Naive thymus-derived CD4-positive, alpha-beta T cell (primary cell): ENCODE measurements at regions of chr7 and their contacts with region 1.

Region 1: DNA sequence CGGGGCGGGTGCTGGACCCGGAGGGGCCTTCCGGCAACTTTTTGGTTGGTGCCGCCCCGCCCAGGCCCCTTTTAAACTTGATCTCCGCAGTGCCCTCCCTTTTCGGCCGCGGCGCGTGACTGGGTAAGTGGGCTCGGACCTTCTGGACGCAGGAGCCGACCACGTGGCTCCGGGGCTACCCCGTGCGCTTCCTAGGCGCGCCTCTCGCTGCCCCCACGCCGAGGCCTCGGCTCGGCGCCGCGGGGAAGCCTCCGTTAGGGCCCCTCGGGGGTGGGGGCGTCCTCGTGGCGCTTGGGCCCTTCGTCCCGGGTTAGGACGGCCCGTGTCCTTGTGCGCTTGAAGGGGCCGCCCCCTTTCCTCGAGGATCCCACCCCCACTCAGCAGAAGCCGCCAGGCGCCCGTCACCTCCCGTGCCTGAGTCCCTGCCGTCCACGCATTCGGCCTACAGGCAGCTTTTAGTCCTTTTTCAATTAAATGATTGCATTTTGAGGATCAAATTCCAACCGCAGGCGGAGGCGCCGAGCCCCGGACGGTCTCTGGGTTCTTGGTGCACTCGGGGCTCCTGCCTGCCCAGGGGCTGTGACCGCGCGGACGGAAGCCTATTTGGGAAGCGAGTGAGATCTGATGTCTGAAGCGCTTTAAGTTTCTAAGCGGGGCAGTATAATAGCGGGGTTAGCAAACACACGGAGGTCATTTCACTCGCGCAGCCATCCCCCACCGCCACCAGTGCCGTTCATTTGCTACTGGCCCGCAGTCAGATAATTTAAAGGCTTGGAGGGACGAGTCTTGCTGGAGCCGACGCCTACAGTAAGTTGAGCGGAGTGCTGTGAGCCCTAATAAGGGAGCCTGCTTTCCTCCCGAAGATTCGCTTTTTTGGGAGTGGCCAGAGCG is 31.8 kb upstream of the TOMM7 start:
- DNase-seq: peak in 8 of 9 donors; percentile 9 to 87 (median 70)
- ATAC-seq: peak; percentile 39
- H3K4me3 ChIP-seq: peak overlapping the region; percentile 88
- H3K4me3 Mint-ChIP-seq: peak overlapping the region; percentile 90 to 97 (median 94)
- H3K27ac ChIP-seq: peak overlapping the region; percentile 93
- H3K27ac Mint-ChIP-seq: peak overlapping the region; percentile 85 to 97 (median 92)
- H3K4me1 ChIP-seq: peaks cover 0 to 4% of the 10 kb centered on the region in 2 donors
- H3K4me1 Mint-ChIP-seq: peaks cover 11 to 37% (median 16%) of the 10 kb centered on the region in 7 donors
- H3K27me3 ChIP-seq: no peaks in the 10 kb centered on the region
- H3K27me3 Mint-ChIP-seq: peaks cover 0 to 5% (median 0%) of the 10 kb centered on the region in 5 donors

Region 2: GRCh38 chr7:22672846-22673652 is 181.4 kb before region 1 on chr7:
- CTCF ChIA-PET with region 1: no interaction called
- POLR2A ChIA-PET with region 1: no interaction called
- intact Hi-C with region 1: loop called in 1 of 2 experiments (anchors 10 kb)
- DNase-seq: no peak
- ATAC-seq: no peak
- H3K4me3 ChIP-seq: no peak overlapping the region
- H3K4me3 Mint-ChIP-seq: peak overlapping the region in 7 of 10 donors; percentile 7 to 68 (median 37)
- H3K27ac ChIP-seq: no peak overlapping the region
- H3K27ac Mint-ChIP-seq: peak overlapping the region; percentile 14 to 88 (median 78)
- H3K4me1 ChIP-seq: peaks cover 18 to 54% of the 10 kb centered on the region in 2 donors
- H3K4me1 Mint-ChIP-seq: peaks cover 43 to 68% (median 65%) of the 10 kb centered on the region in 7 donors
- H3K27me3 ChIP-seq: no peaks in the 10 kb centered on the region
- H3K27me3 Mint-ChIP-seq: peaks cover 0 to 13% (median 0%) of the 10 kb centered on the region in 5 donors

Region 3: DNA sequence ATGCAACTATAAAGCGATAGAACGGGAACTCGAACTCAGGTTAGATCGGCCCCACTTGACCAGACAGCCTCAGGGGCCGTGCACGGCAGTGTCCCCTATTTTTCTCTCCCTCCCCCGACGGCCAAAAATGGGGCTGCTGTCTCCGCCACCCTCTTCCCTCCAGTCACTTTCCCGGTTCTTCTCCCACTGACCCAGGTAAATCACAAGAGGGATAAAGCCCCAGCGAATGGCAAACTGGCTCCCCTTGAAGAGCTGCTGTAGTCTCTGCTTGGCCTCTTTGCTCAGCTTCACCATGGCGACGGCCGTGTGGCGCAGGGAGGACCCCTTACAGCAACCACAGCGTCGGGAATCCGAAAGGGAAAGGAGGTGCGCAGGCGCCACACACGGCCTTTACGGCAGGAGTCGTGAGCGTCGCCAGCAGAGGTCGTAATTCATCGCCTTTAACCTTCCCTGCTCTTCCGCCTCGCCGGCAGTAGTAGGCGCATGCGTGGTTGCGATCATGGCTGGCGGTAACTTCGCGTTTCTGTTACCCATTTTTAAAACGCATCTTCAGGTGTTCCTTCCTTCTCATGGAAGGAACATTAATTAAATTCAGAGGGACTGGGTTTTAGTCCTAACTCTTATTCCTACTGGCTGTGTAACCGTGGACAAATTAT is 31.8 kb before region 1 on chr7 and contains the start of gene TOMM7:
- CTCF ChIA-PET with region 1: no interaction called
- POLR2A ChIA-PET with region 1: interaction called, 6 read pairs
- intact Hi-C with region 1: loop called (anchors 1 kb)
- DNase-seq: peak; percentile 68 to 92 (median 90)
- ATAC-seq: peak; percentile 99
- H3K4me3 ChIP-seq: peak within 1 kb of the TSS; percentile 83
- H3K4me3 Mint-ChIP-seq: peak within 1 kb of the TSS; percentile 93 to 100 (median 99)
- H3K27ac ChIP-seq: peak within 1 kb of the TSS; percentile 94
- H3K27ac Mint-ChIP-seq: peak within 1 kb of the TSS; percentile 94 to 100 (median 99)
- H3K4me1 ChIP-seq: peaks cover 6 to 19% of the 10 kb centered on the region in 2 donors
- H3K4me1 Mint-ChIP-seq: peaks cover 15 to 53% (median 43%) of the 10 kb centered on the region in 7 donors
- H3K27me3 ChIP-seq: peaks cover 0 to 4% of the 10 kb centered on the region in 2 donors
- H3K27me3 Mint-ChIP-seq: peaks cover 15 to 36% (median 19%) of the 10 kb centered on the region in 5 donors
- total RNA-seq, gene TOMM7: 302 to 737 (median 649) TPM

Region 4: DNA sequence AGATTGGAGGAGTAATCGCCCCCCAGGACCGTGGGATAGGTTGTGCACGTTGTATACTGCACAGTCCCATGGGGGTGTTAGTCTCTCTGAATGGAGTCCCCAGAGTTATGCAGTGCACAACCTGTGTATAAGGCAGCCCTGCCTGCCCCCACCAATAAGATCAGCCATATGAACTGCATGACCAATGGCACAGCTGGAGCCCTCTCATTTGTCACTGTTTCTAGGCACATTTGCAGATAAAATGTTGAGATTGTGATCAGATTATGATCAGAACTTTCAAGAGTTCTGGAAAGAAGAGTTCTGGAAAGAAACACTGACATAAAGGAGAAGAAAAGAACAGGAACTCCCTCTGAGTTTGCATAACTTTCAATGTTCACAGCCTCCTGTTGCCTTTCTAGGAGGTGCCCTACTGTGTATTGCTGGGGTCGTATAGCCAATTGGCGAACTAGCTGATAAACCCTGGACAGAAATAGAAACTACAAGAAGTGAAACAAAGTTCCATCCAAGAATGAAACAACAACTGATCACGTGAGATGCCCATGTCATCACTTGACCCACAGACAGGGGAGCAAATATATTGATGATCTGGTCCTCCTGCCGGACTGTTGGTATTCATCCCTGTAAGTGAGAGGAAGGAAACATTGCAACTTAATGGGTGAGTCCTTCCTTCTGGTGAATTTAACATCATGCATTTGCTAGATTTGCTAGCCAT is 17.8 kb after region 1 on chr7:
- CTCF ChIA-PET with region 1: no interaction called
- POLR2A ChIA-PET with region 1: no interaction called
- intact Hi-C with region 1: no loop called
- DNase-seq: no peak
- ATAC-seq: peak; percentile 69
- H3K4me3 ChIP-seq: no peak overlapping the region
- H3K4me3 Mint-ChIP-seq: no peak overlapping the region
- H3K27ac ChIP-seq: no peak overlapping the region
- H3K27ac Mint-ChIP-seq: no peak overlapping the region
- H3K4me1 ChIP-seq: no peaks in the 10 kb centered on the region
- H3K4me1 Mint-ChIP-seq: peaks cover 0 to 13% (median 0%) of the 10 kb centered on the region in 7 donors
- H3K27me3 ChIP-seq: no peaks in the 10 kb centered on the region
- H3K27me3 Mint-ChIP-seq: no peaks in the 10 kb centered on the region

Region 5: DNA sequence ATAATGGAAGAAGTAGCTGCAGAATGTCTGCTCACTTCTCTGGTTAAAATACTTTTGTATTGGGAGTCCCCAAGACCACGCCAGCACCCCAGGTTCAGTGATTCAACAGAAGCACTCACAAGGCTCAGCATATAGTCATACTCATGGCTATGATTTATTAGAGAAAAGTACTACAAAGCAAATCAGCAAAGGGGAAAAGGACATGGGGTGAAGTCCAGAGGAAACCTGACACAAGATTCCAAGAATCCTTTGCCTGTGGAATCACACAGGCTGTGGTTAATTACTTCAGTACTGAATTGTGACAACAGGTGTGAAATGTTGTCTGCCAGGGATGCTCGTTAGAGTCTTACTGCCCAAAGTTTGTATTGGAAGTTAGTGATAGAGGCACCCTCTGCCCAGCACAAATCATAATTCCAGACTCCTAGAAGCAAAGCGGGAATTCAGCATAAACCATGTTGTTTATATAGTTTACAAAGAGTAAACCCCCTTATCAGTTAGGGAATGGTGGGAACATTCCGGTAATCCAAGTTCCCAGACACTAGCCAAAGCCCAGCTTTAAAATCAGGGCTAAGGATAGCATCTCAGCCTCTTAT is 80.2 kb after region 1 on chr7:
- CTCF ChIA-PET with region 1: no interaction called
- POLR2A ChIA-PET with region 1: no interaction called
- intact Hi-C with region 1: loop called in 1 of 2 experiments (anchors 5 kb)
- DNase-seq: no peak
- ATAC-seq: no peak
- H3K4me3 ChIP-seq: no peak overlapping the region
- H3K4me3 Mint-ChIP-seq: no peak overlapping the region
- H3K27ac ChIP-seq: no peak overlapping the region
- H3K27ac Mint-ChIP-seq: no peak overlapping the region
- H3K4me1 ChIP-seq: no peaks in the 10 kb centered on the region
- H3K4me1 Mint-ChIP-seq: no peaks in the 10 kb centered on the region
- H3K27me3 ChIP-seq: no peaks in the 10 kb centered on the region
- H3K27me3 Mint-ChIP-seq: peaks cover 0 to 12% (median 5%) of the 10 kb centered on the region in 5 donors

Region 6: GRCh38 chr7:23105644-23106056 is 251.2 kb after region 1 on chr7 and contains the start of gene KLHL7:
- CTCF ChIA-PET with region 1: no interaction called
- POLR2A ChIA-PET with region 1: no interaction called
- intact Hi-C with region 1: loop called (anchors 1 to 2 kb)
- DNase-seq: peak; percentile 90 to 95 (median 93)
- ATAC-seq: peak; percentile 99
- H3K4me3 ChIP-seq: peak within 1 kb of the TSS; percentile 93
- H3K4me3 Mint-ChIP-seq: peak within 1 kb of the TSS; percentile 90 to 99 (median 96)
- H3K27ac ChIP-seq: peak within 1 kb of the TSS; percentile 90
- H3K27ac Mint-ChIP-seq: peak within 1 kb of the TSS; percentile 91 to 97 (median 96)
- H3K4me1 ChIP-seq: peaks cover 4 to 18% of the 10 kb centered on the region in 2 donors
- H3K4me1 Mint-ChIP-seq: peaks cover 33 to 51% (median 47%) of the 10 kb centered on the region in 7 donors
- H3K27me3 ChIP-seq: no peaks in the 10 kb centered on the region
- H3K27me3 Mint-ChIP-seq: no peaks in the 10 kb centered on the region
- total RNA-seq, gene KLHL7: 16.9 to 22.9 (median 22.7) TPM

Region 7: DNA sequence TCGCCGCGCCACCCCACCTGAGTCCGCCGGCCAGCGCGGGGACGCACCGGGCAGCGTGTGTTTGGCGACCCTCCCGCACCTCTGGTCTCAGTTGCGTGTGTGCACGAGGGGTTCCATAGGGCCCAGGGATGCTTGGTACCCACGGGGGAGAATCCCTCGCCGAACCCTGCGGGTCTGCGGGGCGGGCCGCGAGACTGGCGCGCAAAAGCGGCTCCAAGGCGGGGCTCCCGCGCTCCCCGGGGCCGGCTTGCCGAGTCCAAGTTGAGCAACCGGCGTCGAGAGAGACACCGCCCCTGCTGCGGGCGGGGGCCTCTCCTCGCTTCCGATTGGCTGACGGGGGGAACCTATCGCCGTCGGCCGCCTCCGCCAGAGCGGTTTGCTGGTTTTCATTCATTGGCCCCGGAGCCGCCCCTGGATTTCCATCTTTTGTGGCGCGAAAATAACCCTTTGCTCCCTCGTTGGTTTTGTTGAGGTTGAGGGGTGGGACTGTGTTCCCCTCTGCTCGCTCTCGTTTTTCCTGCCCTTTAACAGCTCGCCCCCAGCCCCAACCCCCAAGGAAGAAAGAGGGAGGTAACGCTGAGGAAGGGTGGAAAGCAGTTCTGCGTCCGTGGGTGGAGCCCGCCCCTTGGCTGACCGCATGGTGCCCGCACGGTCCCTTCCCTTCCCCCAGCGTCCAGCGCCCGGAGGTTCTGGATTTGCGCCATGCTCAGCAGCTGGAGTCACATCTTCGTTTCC is 619.9 kb after region 1 on chr7:
- CTCF ChIA-PET with region 1: no interaction called
- POLR2A ChIA-PET with region 1: no interaction called
- intact Hi-C with region 1: loop called in 1 of 2 experiments (anchors 10 kb)
- DNase-seq: peak in 6 of 9 donors; percentile 13 to 90 (median 26)
- ATAC-seq: peak; percentile 80
- H3K4me3 ChIP-seq: no peak overlapping the region
- H3K4me3 Mint-ChIP-seq: peak overlapping the region; percentile 13 to 85 (median 54)
- H3K27ac ChIP-seq: no peak overlapping the region
- H3K27ac Mint-ChIP-seq: peak overlapping the region in 5 of 9 donors; percentile 21 to 70 (median 69)
- H3K4me1 ChIP-seq: peaks cover 12 to 22% of the 10 kb centered on the region in 2 donors
- H3K4me1 Mint-ChIP-seq: peaks cover 17 to 35% (median 29%) of the 10 kb centered on the region in 7 donors
- H3K27me3 ChIP-seq: peaks cover 78 to 85% of the 10 kb centered on the region in 2 donors
- H3K27me3 Mint-ChIP-seq: peaks cover 67 to 75% (median 70%) of the 10 kb centered on the region in 5 donors